SK-N-SH (cell line): ENCODE measurements at regions of chr6 and their contacts with region 1.

Region 1: GRCh38 chr6:23446394-23447046 is 679.5 kb upstream of the NRSN1 start:
- DNase-seq: peak; percentile 42
- H3K4me3 ChIP-seq: peak overlapping the region in 1 of 2 experiments; percentile 37; a peak in 1 of 4 replicates
- H3K27ac ChIP-seq: peak overlapping the region in 1 of 2 experiments; percentile 98; a peak in 3 of 4 replicates
- H3K4me1 ChIP-seq: peaks cover 8 to 37% of the 10 kb centered on the region in 2 experiments; a peak in 3 of 4 replicates
- H3K27me3 ChIP-seq: no peaks in the 10 kb centered on the region
- CTCF ChIP-seq: peak; percentile 73
- EP300 ChIP-seq: peak in 1 of 2 experiments; percentile 70; a peak in 2 of 4 replicates
- RAD21 ChIP-seq: peak; percentile 96

Region 2: DNA sequence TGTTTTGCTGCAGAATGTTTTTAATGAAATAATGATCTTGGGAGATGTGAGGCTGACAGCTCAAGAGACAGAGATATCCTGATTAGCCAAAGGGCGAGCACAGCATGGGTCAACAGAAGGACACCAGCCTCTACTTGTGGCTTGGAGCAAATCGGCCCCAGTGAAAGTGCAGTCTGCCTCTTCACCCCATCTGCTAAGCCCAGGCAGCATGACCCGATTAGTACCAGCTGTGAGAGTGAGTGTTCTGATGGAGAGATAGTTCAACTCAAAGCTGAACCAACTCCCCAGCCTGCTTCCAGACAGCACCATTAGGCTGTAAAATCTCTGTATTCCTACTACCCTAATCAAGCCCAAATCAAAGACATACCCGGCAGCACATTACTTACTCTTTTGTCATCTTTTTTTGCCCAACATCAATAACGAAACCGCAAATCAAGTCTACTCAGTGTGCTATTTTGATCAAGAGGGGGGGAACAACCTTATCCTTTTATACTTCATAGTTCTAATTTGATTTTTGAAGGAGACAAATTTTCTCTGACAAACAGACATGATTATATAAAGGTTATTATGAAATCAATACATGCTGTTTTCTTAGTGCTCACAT is 165.4 kb after region 1 on chr6:
- CTCF ChIA-PET with region 1: interaction called, 21 read pairs
- POLR2A ChIA-PET with region 1: interaction called, 8 read pairs
- DNase-seq: peak; percentile 86
- H3K4me3 ChIP-seq: no peak overlapping the region
- H3K27ac ChIP-seq: peak overlapping the region in 1 of 2 experiments; percentile 100; a peak in 2 of 4 replicates
- H3K4me1 ChIP-seq: peaks cover 0 to 29% of the 10 kb centered on the region in 2 experiments; a peak in 2 of 4 replicates
- H3K27me3 ChIP-seq: no peaks in the 10 kb centered on the region
- CTCF ChIP-seq: no peak
- EP300 ChIP-seq: peak in 1 of 2 experiments; percentile 99; a peak in 2 of 4 replicates
- RAD21 ChIP-seq: peak; percentile 44

Region 3: GRCh38 chr6:23659125-23659524 is 212.6 kb after region 1 on chr6:
- CTCF ChIA-PET with region 1: interaction called, 59 read pairs
- POLR2A ChIA-PET with region 1: no interaction called
- DNase-seq: peak; percentile 52
- H3K4me3 ChIP-seq: peak overlapping the region in 1 of 2 experiments; percentile 44; a peak in 1 of 4 replicates
- H3K27ac ChIP-seq: peak overlapping the region in 1 of 2 experiments; percentile 96; a peak in 2 of 4 replicates
- H3K4me1 ChIP-seq: peaks cover 0 to 35% of the 10 kb centered on the region in 2 experiments; a peak in 2 of 4 replicates
- H3K27me3 ChIP-seq: no peaks in the 10 kb centered on the region
- CTCF ChIP-seq: peak; percentile 17; the same call in 1 of the 2 replicates
- EP300 ChIP-seq: no peak
- RAD21 ChIP-seq: peak; percentile 93